ENCODE measurements at regions of chr21 and their contacts with region 1.

Region 1: GRCh38 chr21:38805328-38806152 is at the start of gene ETS2:
- DNase-seq: peak; percentile 72
- H3K4me3 Mint-ChIP-seq: peak within 1 kb of the TSS; percentile 92
- H3K27ac Mint-ChIP-seq: peak within 1 kb of the TSS; percentile 90
- H3K4me1 Mint-ChIP-seq: peaks cover 27% of the 10 kb centered on the region
- H3K27me3 Mint-ChIP-seq: peaks cover 7% of the 10 kb centered on the region
- total RNA-seq, gene ETS2: 22.9 and 25.8 TPM in 2 replicates

Region 2: GRCh38 chr21:38780879-38781278 is 24.7 kb before region 1 on chr21:
- intact Hi-C with region 1: loop called (anchors 1 kb)
- DNase-seq: peak; percentile 31
- H3K4me3 Mint-ChIP-seq: no peak overlapping the region
- H3K27ac Mint-ChIP-seq: peak overlapping the region; percentile 59
- H3K4me1 Mint-ChIP-seq: peaks cover 42% of the 10 kb centered on the region
- H3K27me3 Mint-ChIP-seq: no peaks in the 10 kb centered on the region

Region 3: DNA sequence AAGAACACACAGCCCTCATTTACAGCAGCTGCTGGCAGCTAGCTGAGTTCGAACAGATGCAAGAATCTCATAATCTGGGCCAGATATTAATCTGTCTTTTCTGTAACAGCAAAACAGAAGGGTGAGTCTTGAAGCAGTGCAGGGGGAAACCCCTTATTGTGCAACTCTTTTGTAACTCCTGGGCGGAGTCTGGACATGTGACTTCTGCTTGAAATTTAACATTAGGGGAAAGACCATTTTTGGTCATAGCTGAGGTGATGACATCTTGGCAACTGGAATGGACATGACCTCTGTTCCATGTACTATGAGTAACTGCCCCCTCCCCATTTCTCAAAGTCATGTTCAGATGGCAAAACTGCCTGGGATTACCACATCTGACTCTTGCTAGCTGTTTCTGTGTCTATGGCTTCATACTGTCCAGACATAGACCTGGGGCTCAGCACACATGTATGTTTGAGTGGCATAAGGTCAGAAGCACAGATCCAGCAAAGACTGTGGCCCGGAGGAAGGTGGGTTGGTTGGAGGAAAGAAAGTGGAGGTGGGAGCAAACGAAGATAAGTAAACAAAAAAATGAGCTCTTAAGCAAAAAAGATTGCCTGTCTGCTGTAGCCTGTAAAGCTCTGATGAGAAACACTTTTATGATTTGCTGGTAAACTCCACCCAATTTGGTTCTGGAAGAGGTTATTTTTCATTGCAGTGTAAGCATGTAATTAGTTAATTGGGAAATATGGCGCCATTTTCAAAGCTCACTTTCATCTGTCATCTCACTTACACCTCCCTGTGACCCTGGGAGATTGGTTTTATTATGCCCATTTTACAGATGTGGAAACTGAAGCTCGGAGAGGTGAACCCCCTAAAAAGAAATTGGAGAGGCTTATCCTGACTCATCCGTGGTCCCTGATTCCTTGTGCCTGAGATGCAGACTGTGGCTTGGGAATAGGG is 26.3 kb after region 1 on chr21:
- intact Hi-C with region 1: loop called (anchors 2 kb)
- DNase-seq: peak; percentile 48
- H3K4me3 Mint-ChIP-seq: no peak overlapping the region
- H3K27ac Mint-ChIP-seq: peak overlapping the region; percentile 27
- H3K4me1 Mint-ChIP-seq: peaks cover 16% of the 10 kb centered on the region
- H3K27me3 Mint-ChIP-seq: peaks cover 7% of the 10 kb centered on the region

Region 4: DNA sequence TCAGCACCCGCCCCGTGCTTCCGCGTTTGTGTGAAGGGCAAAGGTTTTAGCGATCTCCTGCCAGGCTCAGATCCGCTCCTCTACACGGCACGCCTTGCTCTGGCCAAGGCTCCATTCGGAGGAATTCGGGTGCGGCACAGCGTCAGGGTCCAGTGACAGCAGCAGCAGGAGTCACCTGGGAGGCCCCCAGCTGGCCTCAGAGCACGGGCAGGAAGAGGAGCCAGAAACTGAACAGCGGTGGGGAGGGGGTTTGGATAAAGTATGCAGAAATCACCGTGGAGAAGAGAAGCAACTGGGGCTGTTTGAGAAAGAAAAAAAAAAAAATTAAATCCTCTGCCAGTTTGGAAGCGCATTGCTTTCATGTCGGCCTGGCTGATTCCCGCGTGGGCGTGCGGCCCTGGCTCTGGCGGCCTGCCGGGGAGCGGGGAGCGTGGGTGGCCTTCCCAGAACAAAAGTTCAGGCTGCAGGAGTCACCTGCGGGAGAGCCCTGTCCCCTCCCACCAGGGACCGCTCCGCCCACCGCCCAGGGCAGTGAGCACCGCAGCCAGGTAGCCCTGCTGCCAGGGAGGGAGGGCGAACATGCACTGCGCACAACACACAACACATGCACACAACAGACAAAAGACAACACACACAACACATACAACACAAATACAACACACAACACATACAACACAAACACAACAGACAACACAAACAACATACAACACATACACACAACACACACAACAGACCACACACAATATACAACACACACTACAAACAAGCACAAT is 107.8 kb after region 1 on chr21:
- intact Hi-C with region 1: loop called (anchors 5 kb)
- DNase-seq: no peak
- H3K4me3 Mint-ChIP-seq: no peak overlapping the region
- H3K27ac Mint-ChIP-seq: no peak overlapping the region
- H3K4me1 Mint-ChIP-seq: no peaks in the 10 kb centered on the region
- H3K27me3 Mint-ChIP-seq: peaks cover 4% of the 10 kb centered on the region